ENCODE measurements at regions of chr1 and their contacts with region 1.

Region 1: DNA sequence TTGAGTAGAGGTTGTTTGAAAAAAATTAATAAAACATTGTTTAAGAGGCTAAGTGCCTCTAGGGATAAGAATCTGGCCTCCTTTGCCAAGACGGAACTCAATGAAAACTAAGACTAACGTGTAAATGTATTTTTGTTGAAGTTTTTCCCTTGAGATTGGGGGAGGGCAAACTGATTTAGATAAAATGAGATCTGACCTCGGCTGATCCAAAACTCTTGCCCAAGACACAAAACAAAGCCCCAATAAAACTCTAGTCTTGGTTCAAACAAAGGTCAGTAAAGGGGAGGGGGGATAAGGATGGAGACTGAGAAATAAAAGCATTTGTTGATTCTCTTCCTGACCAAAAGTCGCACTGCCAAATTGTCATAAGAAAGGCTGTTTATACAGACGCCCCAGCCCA is 134.8 kb upstream of the DPT start:
- DNase-seq: no peak
- H3K4me3 ChIP-seq: no peak overlapping the region
- H3K4me3 Mint-ChIP-seq: no peak overlapping the region
- H3K27ac Mint-ChIP-seq: peak overlapping the region; percentile 48
- H3K4me1 ChIP-seq: peaks cover 25% of the 10 kb centered on the region
- H3K4me1 Mint-ChIP-seq: peaks cover 29% of the 10 kb centered on the region
- H3K27me3 ChIP-seq: no peaks in the 10 kb centered on the region
- H3K27me3 Mint-ChIP-seq: no peaks in the 10 kb centered on the region
- CTCF ChIP-seq: no peak

Region 2: DNA sequence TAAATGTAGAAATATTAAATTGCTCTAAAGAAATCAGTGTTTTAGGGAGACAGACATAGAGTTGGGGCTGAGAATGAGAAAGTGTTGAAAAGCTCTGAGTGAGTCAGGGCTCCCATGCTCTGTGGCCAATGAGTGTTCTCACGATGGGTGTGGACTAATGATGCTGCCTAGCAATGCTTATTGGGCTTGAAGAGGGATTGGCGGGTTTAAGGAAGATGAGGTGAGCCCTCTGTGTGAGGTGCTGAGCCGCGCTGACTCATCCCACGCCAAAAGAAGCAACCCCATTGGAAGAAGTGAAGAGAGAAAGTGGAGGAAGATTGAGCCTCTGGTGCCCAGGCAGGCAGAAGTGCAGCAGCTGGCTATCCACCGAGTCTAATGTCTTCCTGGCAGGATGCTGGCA is 69.7 kb before region 1 on chr1:
- CTCF ChIA-PET with region 1: no interaction called
- POLR2A ChIA-PET with region 1: no interaction called
- intact Hi-C with region 1: no loop called
- DNase-seq: no peak
- H3K4me3 ChIP-seq: no peak overlapping the region
- H3K4me3 Mint-ChIP-seq: no peak overlapping the region
- H3K27ac Mint-ChIP-seq: peak overlapping the region; percentile 17
- H3K4me1 ChIP-seq: peaks cover 36% of the 10 kb centered on the region
- H3K4me1 Mint-ChIP-seq: peaks cover 50% of the 10 kb centered on the region
- H3K27me3 ChIP-seq: no peaks in the 10 kb centered on the region
- H3K27me3 Mint-ChIP-seq: no peaks in the 10 kb centered on the region
- CTCF ChIP-seq: no peak

Region 3: DNA sequence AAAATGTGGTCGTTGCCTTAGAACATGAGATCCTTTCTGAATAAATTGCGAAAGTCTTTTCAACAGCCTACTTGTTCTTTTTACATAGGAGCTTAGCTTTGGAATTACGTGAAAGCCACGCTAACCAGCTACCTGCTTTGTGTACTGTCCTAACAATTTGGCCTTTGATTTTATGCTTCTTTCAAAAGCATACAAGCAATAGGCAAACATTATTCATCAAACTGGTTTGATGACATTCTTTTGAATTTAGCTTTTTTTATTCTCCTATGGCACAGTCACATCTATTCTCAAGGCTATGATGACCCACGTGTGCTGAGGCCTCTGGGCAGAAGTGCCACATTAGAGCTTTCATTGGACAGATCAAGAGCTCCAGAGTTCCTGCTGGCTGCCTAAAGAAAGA is 43.3 kb after region 1 on chr1:
- CTCF ChIA-PET with region 1: no interaction called
- POLR2A ChIA-PET with region 1: no interaction called
- intact Hi-C with region 1: loop called (anchors 1 kb)
- DNase-seq: peak; percentile 52 to 67
- H3K4me3 ChIP-seq: no peak overlapping the region
- H3K4me3 Mint-ChIP-seq: no peak overlapping the region
- H3K27ac Mint-ChIP-seq: peak overlapping the region; percentile 61
- H3K4me1 ChIP-seq: peaks cover 29% of the 10 kb centered on the region
- H3K4me1 Mint-ChIP-seq: peaks cover 26% of the 10 kb centered on the region
- H3K27me3 ChIP-seq: no peaks in the 10 kb centered on the region
- H3K27me3 Mint-ChIP-seq: no peaks in the 10 kb centered on the region
- CTCF ChIP-seq: no peak

Region 4: DNA sequence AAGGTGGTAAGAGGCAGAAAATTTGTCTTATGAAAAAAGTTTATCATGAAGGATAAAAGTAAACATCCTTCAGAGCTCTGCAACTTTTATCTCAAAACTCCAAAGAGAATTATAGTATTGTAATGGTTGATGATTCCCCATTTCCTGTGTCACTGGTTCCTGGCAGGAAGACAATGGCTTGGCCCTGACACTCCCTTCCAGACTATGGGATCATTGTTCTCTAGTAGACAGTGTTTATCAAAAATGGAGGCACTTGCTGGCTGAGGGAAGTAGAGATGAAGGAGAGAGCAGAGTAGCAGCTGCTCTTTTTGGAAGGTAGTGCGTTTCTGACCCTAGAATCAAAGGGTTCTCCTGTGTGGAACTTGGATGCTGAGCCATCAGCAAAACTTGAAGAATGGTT is 96.8 kb after region 1 on chr1:
- CTCF ChIA-PET with region 1: no interaction called
- POLR2A ChIA-PET with region 1: no interaction called
- intact Hi-C with region 1: loop called (anchors 1 kb)
- DNase-seq: peak in 1 of 2 experiments; percentile 7
- H3K4me3 ChIP-seq: no peak overlapping the region
- H3K4me3 Mint-ChIP-seq: no peak overlapping the region
- H3K27ac Mint-ChIP-seq: peak overlapping the region; percentile 52
- H3K4me1 ChIP-seq: peaks cover 18% of the 10 kb centered on the region
- H3K4me1 Mint-ChIP-seq: peaks cover 20% of the 10 kb centered on the region
- H3K27me3 ChIP-seq: no peaks in the 10 kb centered on the region
- H3K27me3 Mint-ChIP-seq: no peaks in the 10 kb centered on the region
- CTCF ChIP-seq: no peak

Measured in Caco-2 (cell line).